SK-N-SH (cell line): ENCODE measurements at regions of chr16 and their contacts with region 1.

Region 1: GRCh38 chr16:68520649-68521086 is 18.4 kb upstream of the ZFP90 start:
- DNase-seq: peak; percentile 94
- H3K4me3 ChIP-seq: peak overlapping the region; percentile 30 to 56
- H3K27ac ChIP-seq: no peak overlapping the region
- H3K4me1 ChIP-seq: peaks cover 0 to 4% of the 10 kb centered on the region in 2 experiments; a peak in 1 of 4 replicates
- H3K27me3 ChIP-seq: no peaks in the 10 kb centered on the region
- CTCF ChIP-seq: peak; percentile 89
- EP300 ChIP-seq: 0 out of 4 replicates have a peak, but pooled peaks of 1 of the 2 experiments have one; percentile 11
- RAD21 ChIP-seq: peak; percentile 66

Region 2: DNA sequence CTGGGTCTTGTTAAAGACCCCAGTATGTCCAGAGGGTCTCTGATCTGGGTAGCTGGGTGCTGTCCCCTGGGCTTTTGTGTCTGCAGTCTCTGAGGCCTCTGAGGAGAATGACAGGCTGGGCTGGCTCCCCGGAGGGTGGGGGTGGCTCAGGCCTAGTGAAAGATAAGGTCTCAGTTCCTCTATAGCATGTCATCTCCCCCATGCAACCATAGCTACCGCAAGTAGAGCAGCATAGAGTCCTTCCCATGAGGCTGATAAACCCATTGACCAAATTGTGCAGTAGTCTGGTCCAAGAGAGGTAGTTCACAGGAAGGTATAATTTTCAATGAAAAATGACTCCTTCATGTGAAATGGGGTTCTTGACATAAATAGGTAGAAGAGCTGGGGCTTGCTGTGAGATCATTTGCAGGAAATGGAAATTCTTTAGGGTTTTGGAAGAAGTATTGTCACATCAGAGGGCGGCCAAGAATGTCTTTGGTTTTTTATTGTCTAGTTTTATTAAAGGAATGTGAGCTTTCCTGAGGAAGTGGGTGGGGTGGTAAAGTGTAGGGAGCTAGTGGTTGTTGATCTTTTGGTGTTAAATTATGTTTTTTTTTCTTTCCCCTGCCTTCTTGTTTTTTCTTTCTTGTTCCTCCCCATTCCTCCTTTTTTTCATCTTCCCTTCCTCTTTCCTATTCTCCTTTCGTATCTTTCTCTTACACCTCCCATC is 230.9 kb before region 1 on chr16:
- CTCF ChIA-PET with region 1: no interaction called
- POLR2A ChIA-PET with region 1: no interaction called
- DNase-seq: no peak
- H3K4me3 ChIP-seq: no peak overlapping the region
- H3K27ac ChIP-seq: no peak overlapping the region
- H3K4me1 ChIP-seq: no peaks in the 10 kb centered on the region
- H3K27me3 ChIP-seq: no peaks in the 10 kb centered on the region
- CTCF ChIP-seq: no peak
- EP300 ChIP-seq: no peak
- RAD21 ChIP-seq: no peak

Region 3: DNA sequence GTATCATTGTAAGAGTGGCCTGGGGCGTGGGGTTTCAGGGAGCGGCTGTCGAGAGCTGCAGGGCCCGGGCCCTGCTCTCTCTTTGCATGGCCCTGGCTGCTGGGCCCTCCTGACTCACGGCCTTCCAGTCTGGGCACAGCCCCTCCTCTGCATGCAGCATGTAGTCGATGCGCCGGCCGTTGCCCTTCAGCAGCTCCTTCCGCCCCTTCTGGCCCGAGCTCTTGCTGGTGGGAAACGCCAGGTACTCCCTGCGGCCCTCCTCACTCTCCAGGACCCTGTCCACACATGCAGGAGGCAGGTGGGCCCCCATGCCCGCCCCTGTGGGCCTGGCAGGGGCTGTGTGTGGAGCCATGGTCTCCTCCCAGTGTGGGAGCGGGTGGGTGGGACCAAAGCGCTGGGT is 159.2 kb before region 1 on chr16:
- CTCF ChIA-PET with region 1: interaction called, 13 read pairs
- POLR2A ChIA-PET with region 1: no interaction called
- DNase-seq: peak; percentile 44
- H3K4me3 ChIP-seq: no peak overlapping the region
- H3K27ac ChIP-seq: peak overlapping the region in 1 of 2 experiments; percentile 83; a peak in 1 of 4 replicates
- H3K4me1 ChIP-seq: peaks cover 0 to 52% of the 10 kb centered on the region in 2 experiments; a peak in 2 of 4 replicates
- H3K27me3 ChIP-seq: no peaks in the 10 kb centered on the region
- CTCF ChIP-seq: no peak
- EP300 ChIP-seq: no peak
- RAD21 ChIP-seq: no peak

Region 4: DNA sequence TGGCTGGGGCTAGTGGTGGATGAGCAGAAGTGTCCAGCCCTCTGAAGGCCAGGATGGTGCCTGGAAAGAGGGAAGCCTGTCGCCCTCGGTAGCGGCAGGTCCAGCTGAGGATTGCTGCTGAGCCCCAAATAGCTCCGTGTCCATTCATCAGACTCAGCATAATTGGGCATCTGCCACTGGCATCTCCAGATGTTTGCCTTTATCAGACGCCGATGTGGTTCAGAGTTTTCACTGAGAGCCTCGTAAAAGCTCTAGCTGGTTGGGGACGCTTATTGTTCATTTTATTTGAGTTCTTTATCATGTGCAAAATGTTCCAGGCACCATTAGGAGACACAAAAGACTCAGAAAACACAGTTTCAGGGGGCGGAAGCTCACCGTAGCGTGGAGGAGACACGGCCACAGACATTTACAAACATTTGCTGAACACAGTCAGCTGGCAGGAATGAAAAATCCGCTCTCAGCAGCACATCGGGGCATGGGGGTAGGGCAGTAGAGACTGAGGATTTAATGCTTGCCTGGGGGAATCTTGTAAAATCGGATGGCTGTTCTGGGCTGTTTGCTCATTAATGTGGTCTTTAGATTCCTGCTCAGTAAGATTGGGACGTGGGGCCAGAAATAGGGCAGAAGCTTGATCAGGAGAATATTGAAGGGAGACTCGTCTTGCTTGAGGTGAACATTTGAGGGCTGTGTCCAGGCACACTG is 114.1 kb before region 1 on chr16:
- CTCF ChIA-PET with region 1: interaction called, 15 read pairs
- POLR2A ChIA-PET with region 1: no interaction called
- DNase-seq: peak; percentile 76
- H3K4me3 ChIP-seq: peak overlapping the region; percentile 23; a peak in 2 of 4 replicates
- H3K27ac ChIP-seq: peak overlapping the region in 1 of 2 experiments; percentile 95; a peak in 2 of 4 replicates
- H3K4me1 ChIP-seq: peaks cover 7 to 14% of the 10 kb centered on the region in 2 experiments; a peak in 3 of 4 replicates
- H3K27me3 ChIP-seq: peaks cover 7% of the 10 kb centered on the region; the same call in 1 of the 2 replicates
- CTCF ChIP-seq: no peak
- EP300 ChIP-seq: peak in 1 of 2 experiments; percentile 49; a peak in 1 of 4 replicates
- RAD21 ChIP-seq: no peak; the same call in 1 of the 2 replicates

Region 5: GRCh38 chr16:68455631-68456030 is 65.0 kb before region 1 on chr16:
- CTCF ChIA-PET with region 1: interaction called, 12 read pairs
- POLR2A ChIA-PET with region 1: no interaction called
- DNase-seq: no peak
- H3K4me3 ChIP-seq: no peak overlapping the region
- H3K27ac ChIP-seq: no peak overlapping the region
- H3K4me1 ChIP-seq: peaks cover 0 to 2% of the 10 kb centered on the region in 2 experiments; a peak in 2 of 4 replicates
- H3K27me3 ChIP-seq: no peaks in the 10 kb centered on the region
- CTCF ChIP-seq: no peak
- EP300 ChIP-seq: no peak
- RAD21 ChIP-seq: no peak

Region 6: DNA sequence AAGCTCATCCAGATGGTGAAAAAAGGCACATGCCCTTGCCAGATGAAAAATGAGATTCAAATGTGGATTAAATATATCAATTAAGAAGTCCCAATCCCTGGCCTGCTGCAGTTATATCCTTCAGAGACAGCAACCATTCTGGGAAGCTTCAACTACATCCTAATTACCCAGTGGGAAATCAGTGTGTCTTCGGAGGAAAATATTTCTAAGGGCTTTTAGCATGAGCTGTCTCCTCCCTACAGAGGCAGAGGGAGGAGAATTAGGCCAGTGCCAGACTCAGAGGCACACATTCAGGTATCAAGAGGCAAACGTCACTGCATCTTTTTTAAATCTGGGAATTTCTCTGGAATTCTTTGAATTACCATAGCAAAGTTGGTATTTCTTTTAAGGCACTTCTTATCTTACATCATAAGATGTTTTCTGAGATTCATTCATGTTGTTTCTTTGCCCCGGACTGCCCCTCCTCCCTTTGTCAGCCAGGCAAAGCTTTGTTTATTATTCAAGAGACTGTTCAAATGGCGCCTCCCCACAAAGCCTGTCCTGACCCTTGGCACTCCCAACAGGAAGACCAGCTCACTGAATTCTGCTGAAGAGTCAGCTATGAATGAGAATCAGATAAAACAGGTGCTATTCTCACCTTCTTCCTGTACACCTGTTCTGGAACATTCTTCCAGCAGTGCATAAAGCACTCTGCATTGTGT is 34.0 kb before region 1 on chr16:
- CTCF ChIA-PET with region 1: interaction called, 12 read pairs
- POLR2A ChIA-PET with region 1: no interaction called
- DNase-seq: no peak
- H3K4me3 ChIP-seq: no peak overlapping the region
- H3K27ac ChIP-seq: no peak overlapping the region
- H3K4me1 ChIP-seq: no peaks in the 10 kb centered on the region
- H3K27me3 ChIP-seq: no peaks in the 10 kb centered on the region
- CTCF ChIP-seq: no peak
- EP300 ChIP-seq: no peak
- RAD21 ChIP-seq: no peak

Region 7: DNA sequence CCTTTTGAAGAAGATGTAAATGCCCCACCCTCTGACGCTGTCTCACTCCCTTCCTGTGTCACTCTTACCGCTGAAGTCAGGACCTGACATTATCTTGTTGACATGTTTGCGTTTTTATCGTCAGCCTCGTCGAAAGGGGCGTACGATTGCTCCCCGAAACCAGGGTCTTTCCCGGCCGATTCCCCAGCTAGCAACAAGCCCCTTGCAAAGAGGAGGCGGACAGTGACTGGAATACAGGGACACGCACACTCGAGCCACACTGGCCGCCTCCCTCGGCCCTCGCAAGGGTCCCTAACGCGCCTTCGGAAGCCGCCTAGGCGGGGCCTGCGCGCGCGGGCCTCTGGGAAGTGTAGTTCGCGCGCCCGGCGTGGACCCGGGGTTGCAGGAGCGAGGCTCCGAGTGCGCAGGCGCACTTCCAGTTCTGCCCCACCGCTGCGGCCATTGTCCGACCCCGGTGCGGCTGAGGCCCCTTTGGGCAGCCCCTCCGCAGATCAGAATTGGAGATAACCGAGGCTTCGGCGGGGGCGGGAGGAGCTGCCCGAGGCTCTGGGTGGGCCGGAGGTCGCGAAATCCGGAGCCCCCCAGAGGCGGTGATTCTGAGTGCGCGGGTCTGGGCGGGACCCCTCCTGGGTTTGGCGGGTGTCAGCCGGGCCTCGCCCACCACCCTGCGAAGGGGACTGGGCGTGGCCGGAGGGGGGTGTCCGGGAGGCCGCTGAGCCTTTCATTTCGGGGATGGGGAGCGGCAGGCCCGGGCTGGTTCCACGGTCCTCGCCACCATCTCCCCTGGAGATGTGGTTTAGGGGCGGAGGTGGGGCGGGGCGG is 18.4 kb after region 1 on chr16 and contains the start of gene ZFP90:
- CTCF ChIA-PET with region 1: interaction called, 11 read pairs
- POLR2A ChIA-PET with region 1: no interaction called
- DNase-seq: peak; percentile 99
- H3K4me3 ChIP-seq: peak within 1 kb of the TSS; percentile 63 to 92
- H3K27ac ChIP-seq: peak within 1 kb of the TSS; percentile 30 to 60; a peak in 1 of 4 replicates
- H3K4me1 ChIP-seq: peaks cover 0 to 3% of the 10 kb centered on the region in 2 experiments; a peak in 1 of 4 replicates
- H3K27me3 ChIP-seq: no peaks in the 10 kb centered on the region
- CTCF ChIP-seq: no peak
- EP300 ChIP-seq: no peak
- RAD21 ChIP-seq: no peak
- polyA plus RNA-seq, gene ZFP90: 9.9 and 13.2 TPM in 2 replicates